ENCODE measurements at regions of chr20 and their contacts with region 1.

Region 1: GRCh38 chr20:41095110-41095969 is 42.0 kb upstream of the PLCG1 start:
- DNase-seq: peak; percentile 69
- ATAC-seq: peak; percentile 77
- H3K4me3 Mint-ChIP-seq: no peak overlapping the region
- H3K27ac Mint-ChIP-seq: no peak overlapping the region
- H3K4me1 Mint-ChIP-seq: peaks cover 5% of the 10 kb centered on the region
- H3K27me3 Mint-ChIP-seq: no peaks in the 10 kb centered on the region

Region 2: GRCh38 chr20:40970201-40970600 is 125.1 kb before region 1 on chr20:
- CTCF ChIA-PET with region 1: interaction called, 51 read pairs
- DNase-seq: peak; percentile 38
- ATAC-seq: no peak
- H3K4me3 Mint-ChIP-seq: no peak overlapping the region
- H3K27ac Mint-ChIP-seq: no peak overlapping the region
- H3K4me1 Mint-ChIP-seq: peaks cover 18% of the 10 kb centered on the region
- H3K27me3 Mint-ChIP-seq: peaks cover 41% of the 10 kb centered on the region

Region 3: DNA sequence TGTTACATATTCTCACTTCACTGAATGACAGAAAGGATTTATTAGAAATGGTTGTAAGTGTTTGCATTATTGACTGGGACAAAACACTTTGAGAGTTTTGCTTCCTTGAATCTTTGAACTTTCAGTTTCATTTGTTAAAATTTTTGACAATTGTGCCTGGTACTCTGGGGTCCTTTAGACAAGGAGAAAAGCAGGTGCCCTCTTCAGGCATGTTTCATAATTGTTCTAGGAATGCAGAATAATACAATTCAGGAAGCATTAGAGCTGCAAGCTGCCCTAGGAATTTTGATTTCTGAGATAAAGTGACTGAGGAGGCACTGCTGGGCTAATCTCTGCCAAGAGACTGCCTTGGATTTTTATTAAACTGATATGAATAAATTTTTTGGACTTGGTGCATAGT is 17.0 kb before region 1 on chr20:
- CTCF ChIA-PET with region 1: interaction called, 12 read pairs
- DNase-seq: no peak
- ATAC-seq: no peak
- H3K4me3 Mint-ChIP-seq: peak overlapping the region; percentile 46
- H3K27ac Mint-ChIP-seq: peak overlapping the region; percentile 81
- H3K4me1 Mint-ChIP-seq: peaks cover 62% of the 10 kb centered on the region
- H3K27me3 Mint-ChIP-seq: no peaks in the 10 kb centered on the region

Region 4: GRCh38 chr20:41119546-41120235 is 24.4 kb after region 1 on chr20:
- CTCF ChIA-PET with region 1: interaction called, 15 read pairs
- DNase-seq: no peak
- ATAC-seq: no peak
- H3K4me3 Mint-ChIP-seq: no peak overlapping the region
- H3K27ac Mint-ChIP-seq: no peak overlapping the region
- H3K4me1 Mint-ChIP-seq: peaks cover 14% of the 10 kb centered on the region
- H3K27me3 Mint-ChIP-seq: no peaks in the 10 kb centered on the region

Region 5: GRCh38 chr20:41339507-41340326 is 244.4 kb after region 1 on chr20:
- CTCF ChIA-PET with region 1: interaction called, 11 read pairs
- DNase-seq: peak; percentile 86
- ATAC-seq: peak; percentile 93
- H3K4me3 Mint-ChIP-seq: peak overlapping the region; percentile 70
- H3K27ac Mint-ChIP-seq: peak overlapping the region; percentile 54
- H3K4me1 Mint-ChIP-seq: peaks cover 11% of the 10 kb centered on the region
- H3K27me3 Mint-ChIP-seq: peaks cover 11% of the 10 kb centered on the region

Measured in activated CD8-positive, alpha-beta memory T cell treated with anti-CD3 and anti-CD28 coated beads, Interleukin-2, amount 10 ng/mL, durations not matched to agents 7 days and 5 days (primary cell).